ENCODE measurements at regions of chr6 and their contacts with region 1.

Region 1: DNA sequence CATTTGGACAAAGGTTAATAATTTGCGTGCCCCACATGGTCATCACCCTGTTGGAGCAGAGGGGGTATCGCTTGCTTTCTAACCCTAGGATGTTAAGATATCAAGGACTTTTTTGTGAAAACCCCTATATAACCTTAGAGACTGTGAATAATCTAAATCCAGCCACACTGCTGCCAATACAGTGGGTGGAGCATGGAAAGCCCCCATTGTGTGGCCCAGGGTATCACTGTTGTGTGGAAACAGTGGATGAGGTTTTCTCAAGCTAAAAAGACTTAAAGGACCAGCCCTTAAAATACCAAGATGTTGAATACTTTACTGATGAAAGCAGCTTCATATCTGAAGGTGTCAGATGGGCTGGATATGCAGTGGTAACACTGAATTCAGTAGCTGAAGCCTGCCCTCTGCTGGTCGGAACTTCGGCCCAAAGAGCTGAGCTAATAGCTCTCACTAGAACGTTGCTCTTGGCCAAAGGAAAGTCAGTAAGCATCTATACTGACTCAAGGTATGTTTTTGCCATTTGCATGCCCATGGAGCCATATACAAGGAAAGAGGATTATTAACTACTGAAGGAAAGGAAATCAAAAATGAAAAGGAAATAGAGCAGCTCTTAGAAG is 695.2 kb downstream of the PHF3 start:
- DNase-seq: peak; percentile 14
- H3K4me3 ChIP-seq: no peak overlapping the region
- H3K27ac ChIP-seq: no peak overlapping the region
- H3K4me1 ChIP-seq: no peaks in the 10 kb centered on the region
- H3K27me3 ChIP-seq: no peaks in the 10 kb centered on the region
- CTCF ChIP-seq: peak; percentile 59 to 67

Region 2: DNA sequence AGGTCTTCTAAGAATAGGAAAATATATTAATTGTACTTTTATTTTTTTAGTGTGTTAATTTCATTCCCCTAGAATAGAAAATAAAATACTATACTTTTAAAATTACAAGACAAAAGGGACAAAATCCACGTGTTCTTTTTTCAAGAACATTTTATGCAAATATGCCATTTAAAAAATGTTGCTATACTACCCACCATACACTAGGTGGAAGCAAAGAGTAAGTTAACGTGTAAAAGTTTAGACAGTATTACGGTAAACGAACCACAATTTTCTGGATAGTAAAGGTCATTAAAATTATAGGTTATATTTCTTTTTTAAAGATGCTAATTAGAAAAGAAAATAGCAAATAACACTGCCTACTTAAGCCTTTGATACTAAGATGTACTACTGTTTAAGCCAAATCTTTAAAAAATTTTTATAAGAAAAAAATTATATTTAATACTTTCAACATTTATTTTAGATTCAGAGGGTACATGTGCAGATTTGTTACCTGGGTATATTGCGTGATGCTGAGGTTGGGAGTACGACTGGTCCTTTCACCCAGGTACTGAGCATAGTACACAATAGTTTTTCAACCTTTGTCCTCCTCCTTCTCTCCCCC is 407.6 kb before region 1 on chr6:
- CTCF ChIA-PET with region 1: no interaction called
- dilution Hi-C with region 1: no loop called
- in situ Hi-C with region 1: no loop called
- intact Hi-C with region 1: loop called (anchors 2 kb)
- DNase-seq: peak; percentile 7
- H3K4me3 ChIP-seq: no peak overlapping the region
- H3K27ac ChIP-seq: no peak overlapping the region
- H3K4me1 ChIP-seq: no peaks in the 10 kb centered on the region
- H3K27me3 ChIP-seq: peaks cover 2% of the 10 kb centered on the region
- CTCF ChIP-seq: peak; percentile 62 to 70

Region 3: GRCh38 chr6:64000873-64001491 is 329.8 kb before region 1 on chr6:
- CTCF ChIA-PET with region 1: no interaction called
- dilution Hi-C with region 1: no loop called
- in situ Hi-C with region 1: loop called (anchors 10 kb)
- intact Hi-C with region 1: no loop called
- DNase-seq: no peak
- H3K4me3 ChIP-seq: no peak overlapping the region
- H3K27ac ChIP-seq: no peak overlapping the region
- H3K4me1 ChIP-seq: no peaks in the 10 kb centered on the region
- H3K27me3 ChIP-seq: no peaks in the 10 kb centered on the region
- CTCF ChIP-seq: no peak

Region 4: GRCh38 chr6:64012351-64013001 is 318.3 kb before region 1 on chr6:
- CTCF ChIA-PET with region 1: interaction called, 6 read pairs
- dilution Hi-C with region 1: no loop called
- in situ Hi-C with region 1: loop called (anchors 10 kb)
- intact Hi-C with region 1: loop called (anchors 1 kb)
- DNase-seq: peak; percentile 6
- H3K4me3 ChIP-seq: no peak overlapping the region
- H3K27ac ChIP-seq: no peak overlapping the region
- H3K4me1 ChIP-seq: no peaks in the 10 kb centered on the region
- H3K27me3 ChIP-seq: peaks cover 3% of the 10 kb centered on the region
- CTCF ChIP-seq: peak; percentile 65 to 96

Region 5: DNA sequence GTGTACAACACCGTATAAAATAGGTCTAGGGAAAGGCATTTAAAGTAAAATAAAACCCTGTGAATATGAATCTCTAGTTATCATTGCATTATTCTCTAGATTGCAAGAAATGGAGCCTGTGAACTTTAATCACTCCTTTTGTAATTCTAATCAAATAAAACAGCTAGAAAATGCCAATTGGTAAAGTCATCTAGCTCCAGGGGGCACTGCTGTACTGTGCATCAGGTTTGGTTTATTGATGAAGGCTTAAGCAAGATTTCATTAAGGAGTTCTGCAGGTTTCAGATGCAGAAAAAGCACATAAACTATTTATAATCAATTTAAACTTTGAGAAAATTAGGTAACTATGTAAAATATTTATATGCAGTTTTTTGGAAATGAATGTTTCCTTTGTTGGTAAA is 50.2 kb before region 1 on chr6:
- CTCF ChIA-PET with region 1: no interaction called
- dilution Hi-C with region 1: no loop called
- in situ Hi-C with region 1: no loop called
- intact Hi-C with region 1: loop called (anchors 2 kb)
- DNase-seq: no peak
- H3K4me3 ChIP-seq: no peak overlapping the region
- H3K27ac ChIP-seq: no peak overlapping the region
- H3K4me1 ChIP-seq: no peaks in the 10 kb centered on the region
- H3K27me3 ChIP-seq: no peaks in the 10 kb centered on the region
- CTCF ChIP-seq: peak; percentile 25 to 37

Region 6: DNA sequence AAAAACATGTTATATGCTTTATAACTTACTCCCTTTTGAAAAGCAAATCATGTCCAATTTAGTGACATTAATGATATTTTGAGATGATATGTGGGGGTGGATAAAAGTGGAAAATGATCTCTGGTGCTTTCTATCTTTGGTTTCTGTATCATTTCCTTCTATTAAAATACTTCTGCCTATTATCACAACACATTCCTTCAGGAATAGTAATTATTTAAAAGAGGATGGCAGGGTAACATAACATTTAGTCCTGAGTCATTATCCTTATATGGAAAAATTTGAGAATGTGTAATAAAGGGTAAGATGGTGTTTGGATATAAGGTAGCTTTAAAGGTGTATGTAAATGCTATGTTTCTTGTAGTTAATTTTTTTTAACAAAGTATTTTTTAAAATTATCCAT is 37.5 kb before region 1 on chr6:
- CTCF ChIA-PET with region 1: no interaction called
- dilution Hi-C with region 1: no loop called
- in situ Hi-C with region 1: no loop called
- intact Hi-C with region 1: no loop called
- DNase-seq: no peak
- H3K4me3 ChIP-seq: no peak overlapping the region
- H3K27ac ChIP-seq: no peak overlapping the region
- H3K4me1 ChIP-seq: no peaks in the 10 kb centered on the region
- H3K27me3 ChIP-seq: no peaks in the 10 kb centered on the region
- CTCF ChIP-seq: no peak

Measured in mammary epithelial cell (primary cell).